A549 (cell line): ENCODE measurements at regions of chr15 and their contacts with region 1.

Region 1: DNA sequence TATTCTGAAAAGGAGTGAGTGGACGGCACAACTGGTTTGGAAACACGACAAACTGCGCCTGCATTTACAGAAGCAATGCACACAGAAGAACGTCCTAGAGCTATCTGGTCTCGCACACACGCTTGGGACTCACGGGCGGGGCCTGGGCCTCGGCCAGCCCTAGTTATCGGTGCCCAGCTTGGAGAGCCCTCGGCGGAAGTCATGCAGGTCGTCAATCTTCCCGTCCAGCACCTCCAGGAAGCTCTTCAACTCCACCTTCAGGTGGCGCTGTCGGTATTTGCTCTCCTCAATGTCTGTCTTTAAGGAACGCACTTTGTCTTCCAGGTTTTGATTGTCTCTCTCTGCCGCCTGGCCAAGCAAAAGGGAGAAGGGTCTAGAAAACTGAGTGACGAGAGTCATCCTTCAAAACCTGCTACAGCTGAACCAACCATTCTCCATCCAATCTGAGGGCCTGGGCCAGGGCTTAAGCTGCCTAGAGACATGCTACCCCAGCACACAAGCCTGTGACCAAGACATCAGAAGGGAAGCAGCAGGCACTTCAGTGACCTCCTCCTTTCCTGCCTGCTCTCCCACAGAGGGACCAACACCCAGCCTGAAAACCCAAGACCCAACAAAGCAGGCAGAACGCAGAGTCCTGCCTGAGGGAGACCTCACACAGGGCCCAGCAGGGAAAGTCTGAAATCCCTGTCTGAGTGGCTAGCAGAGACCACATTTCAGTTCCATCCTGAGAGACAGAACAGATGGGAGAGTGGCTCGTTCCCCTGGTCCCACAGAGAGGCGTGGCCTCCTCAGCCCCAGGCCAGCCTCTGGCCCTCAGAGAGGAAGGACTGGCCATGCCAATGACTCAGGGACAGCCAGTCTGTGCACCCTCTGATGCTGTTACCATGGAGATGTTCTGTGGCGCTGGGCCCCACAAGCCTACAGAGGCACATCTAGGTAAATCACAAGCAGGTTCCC is 40.4 kb downstream of the WHAMM start:
- DNase-seq: peak; percentile 57 to 87
- ATAC-seq: peak; percentile 67 to 93
- H3K4me3 ChIP-seq: no peak overlapping the region
- H3K27ac ChIP-seq: no peak overlapping the region
- H3K4me1 ChIP-seq: no peaks in the 10 kb centered on the region
- CTCF ChIP-seq: peak; percentile 59
- EP300 ChIP-seq: no peak
- POLR2A ChIP-seq: no peak
- RAD21 ChIP-seq: peak; percentile 62 to 79

Region 2: DNA sequence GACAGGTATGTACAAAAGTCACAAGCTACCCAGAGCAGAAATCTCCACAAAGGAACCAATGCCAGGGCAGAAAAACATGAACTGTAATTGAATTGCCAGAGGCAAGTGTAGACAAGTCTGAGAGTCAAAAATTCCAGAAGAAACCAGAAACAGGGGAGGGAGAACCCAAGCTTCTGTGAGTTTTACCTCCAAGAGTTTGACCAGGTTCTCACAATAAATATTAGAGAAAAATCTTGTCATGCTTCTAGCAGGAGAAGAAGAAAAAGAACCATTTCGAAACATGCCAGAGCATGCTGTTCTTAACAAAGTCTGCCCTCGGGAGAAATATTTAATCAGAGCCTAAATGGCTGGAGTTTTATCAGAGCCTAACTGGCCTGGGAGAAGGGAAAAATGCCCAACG is 107.7 kb before region 1 on chr15:
- CTCF ChIA-PET with region 1: no interaction called
- POLR2A ChIA-PET with region 1: no interaction called
- DNase-seq: no peak
- ATAC-seq: no peak
- H3K4me3 ChIP-seq: no peak overlapping the region
- H3K27ac ChIP-seq: peak overlapping the region in 1 of 2 experiments; percentile 18; a peak in 1 of 6 replicates
- H3K4me1 ChIP-seq: 0 out of 3 replicates have a peak, but pooled peaks cover 7% of the 10 kb centered on the region
- CTCF ChIP-seq: no peak
- EP300 ChIP-seq: no peak
- POLR2A ChIP-seq: no peak
- RAD21 ChIP-seq: no peak

Region 3: GRCh38 chr15:82798104-82798503 is 51.7 kb before region 1 on chr15:
- CTCF ChIA-PET with region 1: no interaction called
- POLR2A ChIA-PET with region 1: no interaction called
- DNase-seq: no peak
- ATAC-seq: no peak
- H3K4me3 ChIP-seq: no peak overlapping the region
- H3K27ac ChIP-seq: no peak overlapping the region
- H3K4me1 ChIP-seq: no peaks in the 10 kb centered on the region
- CTCF ChIP-seq: no peak
- EP300 ChIP-seq: no peak
- POLR2A ChIP-seq: no peak
- RAD21 ChIP-seq: no peak

Region 4: DNA sequence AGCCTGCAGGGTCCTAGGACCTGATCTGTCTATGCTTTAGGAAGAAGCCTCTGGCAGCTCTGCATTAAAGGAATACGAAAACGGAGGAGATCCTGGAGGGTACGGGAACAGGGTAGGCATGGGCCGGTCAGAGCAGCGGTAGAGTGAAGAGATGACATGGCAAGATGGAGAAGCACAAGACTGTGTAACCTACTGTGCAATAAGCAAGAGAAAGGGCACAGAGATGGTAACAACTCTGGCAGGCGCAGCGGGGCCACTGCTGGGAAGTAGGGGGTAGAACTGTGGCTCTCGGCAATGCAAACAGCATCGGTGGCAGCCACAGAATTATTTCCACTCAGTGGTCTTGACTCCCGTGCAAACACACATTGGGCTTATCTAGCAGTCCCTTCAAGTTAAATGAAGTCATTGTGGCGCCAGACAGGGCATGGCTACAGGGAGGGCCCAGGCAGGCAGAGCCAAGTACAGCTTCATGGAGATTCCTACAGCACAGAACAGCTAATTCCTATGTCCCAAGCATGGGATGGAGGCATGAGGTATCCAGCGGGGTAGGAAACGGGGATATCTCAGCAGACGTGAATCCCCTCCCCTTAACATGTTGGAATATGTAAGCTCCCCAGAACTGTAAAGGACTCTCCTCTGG is 11.6 kb before region 1 on chr15:
- CTCF ChIA-PET with region 1: interaction called, 15 read pairs
- POLR2A ChIA-PET with region 1: no interaction called
- DNase-seq: no peak
- ATAC-seq: peak; percentile 44 to 60; a peak in 5 of 6 replicates
- H3K4me3 ChIP-seq: no peak overlapping the region
- H3K27ac ChIP-seq: no peak overlapping the region
- H3K4me1 ChIP-seq: no peaks in the 10 kb centered on the region; the same call in 1 of the 3 replicates
- CTCF ChIP-seq: no peak
- EP300 ChIP-seq: no peak
- POLR2A ChIP-seq: no peak
- RAD21 ChIP-seq: no peak

Region 5: GRCh38 chr15:82864967-82865366 is 15.1 kb after region 1 on chr15:
- CTCF ChIA-PET with region 1: interaction called, 13 read pairs
- POLR2A ChIA-PET with region 1: no interaction called
- DNase-seq: no peak
- ATAC-seq: no peak
- H3K4me3 ChIP-seq: no peak overlapping the region
- H3K27ac ChIP-seq: no peak overlapping the region
- H3K4me1 ChIP-seq: no peaks in the 10 kb centered on the region
- CTCF ChIP-seq: no peak
- EP300 ChIP-seq: no peak
- POLR2A ChIP-seq: no peak
- RAD21 ChIP-seq: no peak